ENCODE measurements at regions of chr7 and their contacts with region 1.

Region 1: DNA sequence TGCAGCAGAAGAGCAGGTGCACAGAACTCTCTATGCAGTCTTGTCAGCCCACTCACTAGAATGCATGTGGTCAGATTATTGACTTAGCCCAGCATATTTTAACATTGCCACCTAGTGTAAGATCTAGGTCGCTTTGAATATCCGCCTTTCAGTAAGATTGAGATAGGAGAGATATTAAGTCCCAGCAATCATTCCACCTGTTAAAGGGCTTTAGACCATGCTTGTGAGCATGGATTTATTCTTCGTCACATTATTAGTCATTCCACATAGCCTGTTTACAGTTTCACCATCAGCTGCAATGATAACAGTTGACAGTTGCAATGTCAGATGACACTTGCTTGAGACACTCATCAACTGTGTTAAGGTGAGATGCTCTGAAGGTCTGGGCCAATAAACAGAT is 491.7 kb downstream of the ARL4A start:
- DNase-seq: no peak
- H3K4me3 ChIP-seq: no peak overlapping the region
- H3K27ac ChIP-seq: no peak overlapping the region
- H3K4me1 ChIP-seq: peaks cover 7% of the 10 kb centered on the region
- H3K27me3 ChIP-seq: no peaks in the 10 kb centered on the region
- CTCF ChIP-seq: peak; percentile 54

Region 2: GRCh38 chr7:12686894-12687717 is 492.0 kb before region 1 on chr7 and contains the start of gene ARL4A:
- intact Hi-C with region 1: loop called (anchors 5 kb)
- DNase-seq: peak; percentile 99
- H3K4me3 ChIP-seq: peak within 1 kb of the TSS; percentile 89
- H3K27ac ChIP-seq: peak within 1 kb of the TSS; percentile 91
- H3K4me1 ChIP-seq: peaks cover 42% of the 10 kb centered on the region
- H3K27me3 ChIP-seq: no peaks in the 10 kb centered on the region
- CTCF ChIP-seq: peak; percentile 46
- total RNA-seq, gene ARL4A: 11.5 TPM

Measured in left ventricle myocardium inferior (tissue), 1 donor.